Lower leg skin (tissue), 4 donors: ENCODE measurements at regions of chr3 and their contacts with region 1.

Region 1: GRCh38 chr3:42443819-42444436 is 33.5 kb upstream of the LYZL4 start:
- DNase-seq: peak; percentile 70 to 95
- H3K4me3 ChIP-seq: no peak overlapping the region
- CTCF ChIP-seq: peak in 2 of 3 donors; percentile 21 to 65
- POLR2A ChIP-seq: no peak

Region 2: GRCh38 chr3:42229942-42230688 is 213.8 kb before region 1 on chr3:
- intact Hi-C with region 1: loop called (anchors 5 kb)
- DNase-seq: no peak
- H3K4me3 ChIP-seq: no peak overlapping the region
- CTCF ChIP-seq: no peak
- POLR2A ChIP-seq: no peak

Region 3: GRCh38 chr3:42247576-42248027 is 196.3 kb before region 1 on chr3:
- intact Hi-C with region 1: loop called (anchors 5 kb)
- DNase-seq: peak in 1 of 2 donors; percentile 47
- H3K4me3 ChIP-seq: no peak overlapping the region
- CTCF ChIP-seq: no peak
- POLR2A ChIP-seq: no peak